ENCODE measurements at regions of chr10 and their contacts with region 1.

Region 1: GRCh38 chr10:72079356-72079755 is 9.0 kb downstream of the SPOCK2 start:
- DNase-seq: peak; percentile 55 to 85 (median 71)
- H3K4me3 ChIP-seq: peak overlapping the region in 1 of 2 donors; percentile 25
- H3K4me3 Mint-ChIP-seq: peak overlapping the region; percentile 47 to 96 (median 81)
- H3K27ac ChIP-seq: peak overlapping the region; percentile 94
- H3K27ac Mint-ChIP-seq: peak overlapping the region; percentile 86 to 97 (median 93)
- H3K4me1 ChIP-seq: peaks cover 97% of the 10 kb centered on the region
- H3K4me1 Mint-ChIP-seq: peaks cover 59 to 99% (median 87%) of the 10 kb centered on the region in 4 donors
- H3K27me3 ChIP-seq: no peaks in the 10 kb centered on the region
- H3K27me3 Mint-ChIP-seq: no peaks in the 10 kb centered on the region

Region 2: DNA sequence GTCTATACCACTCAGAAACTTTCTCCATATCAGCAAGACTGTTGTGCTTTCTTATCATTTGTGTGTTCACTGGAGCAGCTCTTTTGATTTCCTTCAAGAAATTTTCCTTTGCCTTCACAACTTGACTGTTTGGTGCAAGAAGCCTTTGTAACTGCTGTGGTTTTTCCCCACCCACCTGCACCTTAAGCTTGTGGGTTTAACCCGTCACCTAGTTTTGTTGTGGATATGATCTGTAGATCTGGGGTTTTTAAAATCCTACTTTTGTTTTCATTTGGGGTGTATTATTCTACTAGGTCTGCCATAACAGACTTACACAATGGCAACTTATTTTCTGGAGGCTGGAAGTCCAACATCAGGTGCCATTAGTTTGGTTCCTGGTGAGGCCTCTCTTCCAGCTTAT is 145.7 kb before region 1 on chr10:
- CTCF ChIA-PET with region 1: no interaction called
- POLR2A ChIA-PET with region 1: no interaction called
- intact Hi-C with region 1: no loop called
- DNase-seq: peak in 4 of 5 donors; percentile 38 to 59 (median 44)
- H3K4me3 ChIP-seq: no peak overlapping the region
- H3K4me3 Mint-ChIP-seq: peak overlapping the region in 7 of 8 donors; percentile 10 to 78 (median 56)
- H3K27ac ChIP-seq: no peak overlapping the region
- H3K27ac Mint-ChIP-seq: peak overlapping the region; percentile 43 to 92 (median 65)
- H3K4me1 ChIP-seq: peaks cover 12% of the 10 kb centered on the region
- H3K4me1 Mint-ChIP-seq: peaks cover 13 to 27% (median 20%) of the 10 kb centered on the region in 4 donors
- H3K27me3 ChIP-seq: no peaks in the 10 kb centered on the region
- H3K27me3 Mint-ChIP-seq: no peaks in the 10 kb centered on the region

Region 3: DNA sequence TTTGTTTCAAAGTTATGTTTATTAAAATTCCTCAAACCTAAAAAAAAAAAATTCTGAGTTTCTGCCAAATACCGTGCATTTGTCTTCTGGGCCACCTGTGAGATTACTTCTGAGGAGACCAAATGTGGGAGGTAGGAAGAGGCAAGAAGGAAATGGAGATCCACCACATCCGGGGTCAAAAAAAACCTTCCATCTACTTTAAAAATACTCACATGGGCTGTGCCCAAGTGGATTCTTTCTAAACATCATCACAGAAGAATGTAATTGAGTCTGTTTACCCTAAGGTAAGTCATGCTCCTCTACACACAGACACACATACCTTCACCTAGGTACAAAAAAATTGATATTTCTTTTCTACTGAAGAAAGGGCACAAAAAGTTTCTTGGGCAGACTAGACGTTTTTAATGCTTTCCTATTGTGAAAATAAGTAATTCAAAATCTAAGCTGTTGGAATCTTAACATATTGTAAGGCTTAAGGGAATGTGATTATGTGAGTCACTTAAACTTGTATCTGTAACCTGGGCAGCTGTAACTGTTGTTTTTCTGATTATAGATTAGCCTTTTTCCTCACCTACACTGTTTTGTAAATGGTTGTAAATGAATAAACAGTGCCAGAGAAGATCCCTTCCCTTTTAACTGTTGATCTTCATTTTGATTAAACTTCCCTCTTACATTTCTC is 28.1 kb after region 1 on chr10:
- CTCF ChIA-PET with region 1: interaction called, 7 read pairs
- POLR2A ChIA-PET with region 1: interaction called, 230 read pairs
- intact Hi-C with region 1: no loop called
- DNase-seq: peak; percentile 62 to 72 (median 71)
- H3K4me3 ChIP-seq: peak overlapping the region in 1 of 2 donors; percentile 16
- H3K4me3 Mint-ChIP-seq: peak overlapping the region; percentile 61 to 87 (median 81)
- H3K27ac ChIP-seq: peak overlapping the region; percentile 53
- H3K27ac Mint-ChIP-seq: peak overlapping the region; percentile 81 to 97 (median 90)
- H3K4me1 ChIP-seq: peaks cover 78% of the 10 kb centered on the region
- H3K4me1 Mint-ChIP-seq: peaks cover 61 to 91% (median 80%) of the 10 kb centered on the region in 4 donors
- H3K27me3 ChIP-seq: no peaks in the 10 kb centered on the region
- H3K27me3 Mint-ChIP-seq: no peaks in the 10 kb centered on the region

Region 4: GRCh38 chr10:72784551-72785351 is 705.4 kb after region 1 on chr10:
- CTCF ChIA-PET with region 1: no interaction called
- POLR2A ChIA-PET with region 1: no interaction called
- intact Hi-C with region 1: no loop called
- DNase-seq: no peak
- H3K4me3 ChIP-seq: no peak overlapping the region
- H3K4me3 Mint-ChIP-seq: no peak overlapping the region
- H3K27ac ChIP-seq: no peak overlapping the region
- H3K27ac Mint-ChIP-seq: no peak overlapping the region
- H3K4me1 ChIP-seq: peaks cover 6% of the 10 kb centered on the region
- H3K4me1 Mint-ChIP-seq: peaks cover 0 to 15% (median 8%) of the 10 kb centered on the region in 4 donors
- H3K27me3 ChIP-seq: no peaks in the 10 kb centered on the region
- H3K27me3 Mint-ChIP-seq: no peaks in the 10 kb centered on the region